ENCODE measurements at regions of chr14 and their contacts with region 1.

Region 1: GRCh38 chr14:55572578-55572977 is 7.4 kb upstream of the KTN1 start:
- DNase-seq: no peak
- ATAC-seq: no peak
- H3K4me3 ChIP-seq: no peak overlapping the region
- H3K27ac ChIP-seq: no peak overlapping the region
- H3K4me1 ChIP-seq: no peaks in the 10 kb centered on the region; the same call in 1 of the 2 replicates
- H3K27me3 ChIP-seq: no peaks in the 10 kb centered on the region
- CTCF ChIP-seq: no peak
- POLR2A ChIP-seq: no peak
- RAD21 ChIP-seq: no peak

Region 2: DNA sequence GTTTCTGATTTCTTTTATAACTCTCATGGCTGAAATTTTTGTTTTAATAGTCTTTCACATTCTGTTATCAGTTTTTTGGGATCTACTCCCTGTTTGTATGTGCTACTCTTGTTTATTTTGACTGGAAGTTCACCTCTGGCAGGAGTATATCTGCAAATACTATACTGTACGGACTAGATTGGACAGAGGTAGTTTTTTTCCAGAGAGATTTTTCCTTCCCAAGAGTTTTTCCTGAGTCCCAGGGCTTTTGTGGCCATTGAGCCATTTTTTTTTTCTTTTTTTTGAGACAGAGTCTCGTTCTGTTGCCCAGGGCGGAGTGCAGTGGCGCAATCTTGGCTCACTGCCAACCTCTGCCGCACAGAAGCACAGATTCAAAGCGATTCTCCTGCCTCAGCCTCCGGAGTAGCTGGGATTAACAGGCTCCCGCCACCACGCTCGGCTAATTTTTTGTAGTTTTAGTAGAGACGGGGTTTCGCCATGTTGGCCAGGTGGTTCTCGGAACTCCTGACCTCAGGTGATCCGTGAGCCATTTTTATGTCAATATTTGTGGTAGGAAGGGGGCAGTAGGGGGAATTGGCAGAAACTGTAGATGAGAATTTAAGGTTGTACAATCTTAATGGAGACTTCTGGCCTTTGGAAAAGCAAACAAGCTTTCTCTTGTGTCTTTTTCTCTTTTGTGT is 26.8 kb after region 1 on chr14:
- CTCF ChIA-PET with region 1: no interaction called
- POLR2A ChIA-PET with region 1: no interaction called
- dilution Hi-C with region 1: no loop called
- in situ Hi-C with region 1: no loop called
- intact Hi-C with region 1: loop called (anchors 1 kb)
- DNase-seq: no peak
- ATAC-seq: no peak
- H3K4me3 ChIP-seq: no peak overlapping the region
- H3K27ac ChIP-seq: no peak overlapping the region
- H3K4me1 ChIP-seq: peaks cover 4% of the 10 kb centered on the region
- H3K27me3 ChIP-seq: no peaks in the 10 kb centered on the region
- CTCF ChIP-seq: no peak
- POLR2A ChIP-seq: no peak
- RAD21 ChIP-seq: no peak

Region 3: DNA sequence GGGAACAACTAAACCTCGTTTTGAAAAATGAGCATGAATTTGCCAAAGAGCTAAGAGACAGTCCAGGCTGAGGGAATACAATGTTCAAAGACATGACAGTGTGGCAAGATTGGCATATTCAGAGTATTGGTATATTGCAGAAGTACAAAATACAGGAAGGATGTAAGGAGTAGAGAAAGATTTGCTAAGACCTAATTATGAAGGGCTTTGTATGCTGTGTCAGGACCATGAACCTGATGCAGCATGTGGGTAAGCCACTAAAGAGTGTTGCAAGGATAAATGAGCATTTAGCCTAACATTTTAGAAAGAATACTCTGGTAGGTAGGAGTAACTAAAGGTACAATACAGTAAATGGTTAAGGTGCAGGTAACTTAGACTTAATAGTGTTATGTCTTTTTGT is 72.6 kb after region 1 on chr14:
- CTCF ChIA-PET with region 1: no interaction called
- POLR2A ChIA-PET with region 1: no interaction called
- dilution Hi-C with region 1: no loop called
- in situ Hi-C with region 1: no loop called
- intact Hi-C with region 1: no loop called
- DNase-seq: no peak
- ATAC-seq: no peak
- H3K4me3 ChIP-seq: no peak overlapping the region
- H3K27ac ChIP-seq: no peak overlapping the region
- H3K4me1 ChIP-seq: no peaks in the 10 kb centered on the region
- H3K27me3 ChIP-seq: no peaks in the 10 kb centered on the region
- CTCF ChIP-seq: no peak
- POLR2A ChIP-seq: no peak
- RAD21 ChIP-seq: no peak

Region 4: GRCh38 chr14:56422703-56423213 is 850.2 kb after region 1 on chr14:
- CTCF ChIA-PET with region 1: no interaction called
- POLR2A ChIA-PET with region 1: no interaction called
- dilution Hi-C with region 1: no loop called
- in situ Hi-C with region 1: no loop called
- intact Hi-C with region 1: no loop called
- DNase-seq: peak; percentile 79
- ATAC-seq: peak; percentile 92
- H3K4me3 ChIP-seq: no peak overlapping the region
- H3K27ac ChIP-seq: no peak overlapping the region
- H3K4me1 ChIP-seq: peaks cover 10% of the 10 kb centered on the region; the same call in 1 of the 2 replicates
- H3K27me3 ChIP-seq: peaks cover 22% of the 10 kb centered on the region
- CTCF ChIP-seq: peak; percentile 89
- POLR2A ChIP-seq: no peak
- RAD21 ChIP-seq: peak; percentile 85